H1 (cell line): ENCODE measurements at regions of chr1 and their contacts with region 1.

Region 1: GRCh38 chr1:26408604-26409003 is 2.0 kb upstream of the LIN28A start:
- DNase-seq: peak in 1 of 2 experiments; percentile 97
- H3K4me3 ChIP-seq: peak overlapping the region; percentile 41 to 78 (median 60); a peak in 6 of 8 replicates
- H3K27ac ChIP-seq: no peak overlapping the region
- H3K4me1 ChIP-seq: peaks cover 0 to 20% (median 6%) of the 10 kb centered on the region in 4 experiments; a peak in 6 of 7 replicates
- H3K27me3 ChIP-seq: no peaks in the 10 kb centered on the region
- CTCF ChIP-seq: no peak
- EP300 ChIP-seq: peak in 1 of 2 experiments; percentile 13; a peak in 1 of 3 replicates
- POLR2A ChIP-seq: no peak
- RAD21 ChIP-seq: peak in 1 of 2 experiments; percentile 16; a peak in 1 of 4 replicates

Region 2: GRCh38 chr1:26336477-26337205 is 72.0 kb before region 1 on chr1:
- CTCF ChIA-PET with region 1: interaction called, 3 read pairs
- POLR2A ChIA-PET with region 1: interaction called, 32 read pairs
- DNase-seq: peak; percentile 67 to 97
- H3K4me3 ChIP-seq: peak overlapping the region; percentile 55 to 86 (median 68)
- H3K27ac ChIP-seq: 0 out of 2 replicates have a peak overlapping the region, but pooled peaks have one; percentile 39
- H3K4me1 ChIP-seq: peaks cover 3 to 12% (median 6%) of the 10 kb centered on the region in 4 experiments
- H3K27me3 ChIP-seq: peaks cover 0 to 11% (median 5%) of the 10 kb centered on the region in 4 experiments; a peak in 5 of 7 replicates
- CTCF ChIP-seq: no peak
- EP300 ChIP-seq: no peak
- POLR2A ChIP-seq: no peak
- RAD21 ChIP-seq: no peak

Region 3: GRCh38 chr1:26345718-26346549 is 62.7 kb before region 1 on chr1:
- CTCF ChIA-PET with region 1: interaction called, 4 read pairs
- POLR2A ChIA-PET with region 1: interaction called, 11 read pairs
- DNase-seq: no peak
- H3K4me3 ChIP-seq: no peak overlapping the region
- H3K27ac ChIP-seq: no peak overlapping the region
- H3K4me1 ChIP-seq: peaks cover 4 to 10% (median 6%) of the 10 kb centered on the region in 4 experiments
- H3K27me3 ChIP-seq: no peaks in the 10 kb centered on the region
- CTCF ChIP-seq: no peak
- EP300 ChIP-seq: no peak
- POLR2A ChIP-seq: no peak
- RAD21 ChIP-seq: no peak

Region 4: GRCh38 chr1:26391450-26391849 is 17.2 kb before region 1 on chr1:
- CTCF ChIA-PET with region 1: interaction called, 27 read pairs
- POLR2A ChIA-PET with region 1: interaction called, 166 read pairs
- DNase-seq: no peak
- H3K4me3 ChIP-seq: no peak overlapping the region
- H3K27ac ChIP-seq: no peak overlapping the region
- H3K4me1 ChIP-seq: peaks cover 1 to 10% (median 3%) of the 10 kb centered on the region in 4 experiments; a peak in 6 of 7 replicates
- H3K27me3 ChIP-seq: no peaks in the 10 kb centered on the region
- CTCF ChIP-seq: peak; percentile 81 to 93 (median 83)
- EP300 ChIP-seq: no peak
- POLR2A ChIP-seq: no peak
- RAD21 ChIP-seq: peak; percentile 94

Region 5: GRCh38 chr1:26431979-26432695 is 23.5 kb after region 1 on chr1 and contains the start of gene DHDDS:
- CTCF ChIA-PET with region 1: interaction called, 3 read pairs
- POLR2A ChIA-PET with region 1: interaction called, 161 read pairs
- DNase-seq: peak; percentile 95 to 99
- H3K4me3 ChIP-seq: peak within 1 kb of the TSS; percentile 62 to 86 (median 83)
- H3K27ac ChIP-seq: peak within 1 kb of the TSS; percentile 53
- H3K4me1 ChIP-seq: peaks cover 2 to 8% (median 5%) of the 10 kb centered on the region in 4 experiments; a peak in 6 of 7 replicates
- H3K27me3 ChIP-seq: no peaks in the 10 kb centered on the region
- CTCF ChIP-seq: no peak
- EP300 ChIP-seq: peak in 1 of 2 experiments; percentile 90; a peak in 2 of 3 replicates
- POLR2A ChIP-seq: peak; percentile 38 to 42; a peak in 2 of 3 replicates
- RAD21 ChIP-seq: no peak
- total RNA-seq, gene DHDDS: 44.6 and 48.0 TPM in 2 replicates

Region 6: GRCh38 chr1:26630634-26631033 is 222.0 kb after region 1 on chr1:
- CTCF ChIA-PET with region 1: no interaction called
- POLR2A ChIA-PET with region 1: no interaction called
- DNase-seq: no peak
- H3K4me3 ChIP-seq: no peak overlapping the region
- H3K27ac ChIP-seq: no peak overlapping the region
- H3K4me1 ChIP-seq: no peaks in the 10 kb centered on the region
- H3K27me3 ChIP-seq: no peaks in the 10 kb centered on the region
- CTCF ChIP-seq: no peak
- EP300 ChIP-seq: no peak
- POLR2A ChIP-seq: no peak
- RAD21 ChIP-seq: no peak